Calu3 (cell line): ENCODE measurements at regions of chr6 and their contacts with region 1.

Region 1: DNA sequence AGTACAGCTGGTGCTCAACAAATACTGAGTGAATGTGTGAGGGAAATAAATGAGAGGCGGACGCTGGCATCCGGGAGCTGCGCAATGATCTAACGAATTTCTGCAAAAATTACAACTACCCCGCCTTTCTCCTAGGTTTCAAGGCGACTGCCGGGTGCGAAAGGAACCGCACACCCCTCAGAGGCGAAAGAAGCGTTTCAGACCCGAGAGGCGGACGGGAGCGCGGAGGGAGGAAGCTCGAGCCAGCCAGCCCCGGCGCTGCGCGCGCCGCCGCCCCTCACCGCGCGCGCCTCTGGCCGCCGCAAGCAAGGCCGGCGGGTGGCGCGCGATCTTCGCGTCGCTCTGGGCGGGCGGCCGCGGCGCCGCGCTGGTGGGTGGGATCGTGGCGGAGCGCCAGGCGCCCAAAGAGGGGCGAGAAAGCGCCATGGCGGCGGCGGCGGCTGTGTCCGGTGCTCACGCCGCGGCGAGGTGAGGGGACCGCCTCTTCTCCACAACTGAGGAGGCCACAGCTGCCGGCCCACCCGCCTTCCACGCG is at the start of gene BLTP3A:
- DNase-seq: peak; percentile 90
- H3K4me3 Mint-ChIP-seq: peak within 1 kb of the TSS; percentile 93
- H3K27ac Mint-ChIP-seq: peak within 1 kb of the TSS; percentile 96
- H3K4me1 Mint-ChIP-seq: peaks cover 34% of the 10 kb centered on the region
- H3K27me3 Mint-ChIP-seq: no peaks in the 10 kb centered on the region
- CTCF ChIP-seq: no peak
- total RNA-seq, gene BLTP3A: 33.4 and 34.8 TPM in 2 replicates

Region 2: GRCh38 chr6:34436803-34437643 is 354.7 kb before region 1 on chr6:
- CTCF ChIA-PET with region 1: no interaction called
- intact Hi-C with region 1: no loop called
- DNase-seq: no peak
- H3K4me3 Mint-ChIP-seq: no peak overlapping the region
- H3K27ac Mint-ChIP-seq: no peak overlapping the region
- H3K4me1 Mint-ChIP-seq: no peaks in the 10 kb centered on the region
- H3K27me3 Mint-ChIP-seq: peaks cover 14% of the 10 kb centered on the region
- CTCF ChIP-seq: no peak

Region 3: DNA sequence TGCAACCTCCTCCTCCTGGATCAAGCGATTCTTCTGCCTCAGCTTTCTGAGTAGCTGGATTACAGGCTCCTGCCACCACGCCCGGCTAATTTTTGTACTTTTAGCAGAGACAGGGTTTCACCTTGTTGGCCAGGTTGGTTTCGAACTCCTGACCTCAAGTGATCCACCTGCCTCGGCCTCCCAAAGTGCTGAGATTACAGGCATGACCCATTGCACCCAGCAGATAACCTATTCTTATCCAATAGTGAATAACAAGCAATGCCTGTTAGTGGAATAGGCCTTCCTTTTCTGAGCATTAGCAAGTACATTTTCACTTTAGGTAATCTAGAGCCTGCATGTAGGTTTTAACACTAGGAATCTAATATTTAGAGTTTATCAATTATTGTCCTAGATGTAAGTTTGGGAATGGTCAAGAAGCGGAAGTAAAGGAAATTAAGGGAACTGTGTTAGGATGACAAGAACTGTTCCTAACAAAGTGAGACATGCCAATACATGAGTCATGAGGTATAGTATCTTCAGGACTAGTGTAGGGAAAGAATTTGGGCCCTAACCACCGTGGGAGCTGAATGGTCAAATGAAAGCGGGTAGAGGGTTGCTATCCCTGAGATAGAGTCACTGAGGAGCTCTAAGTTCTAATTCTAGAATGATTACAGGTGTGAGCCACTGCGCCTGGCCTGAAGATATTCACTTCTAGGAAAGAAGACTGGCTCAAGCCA is 15.1 kb after region 1 on chr6:
- CTCF ChIA-PET with region 1: interaction called, 10 read pairs
- intact Hi-C with region 1: no loop called
- DNase-seq: no peak
- H3K4me3 Mint-ChIP-seq: no peak overlapping the region
- H3K27ac Mint-ChIP-seq: no peak overlapping the region
- H3K4me1 Mint-ChIP-seq: peaks cover 41% of the 10 kb centered on the region
- H3K27me3 Mint-ChIP-seq: no peaks in the 10 kb centered on the region
- CTCF ChIP-seq: no peak

Region 4: GRCh38 chr6:34834789-34835518 is 43.2 kb after region 1 on chr6:
- CTCF ChIA-PET with region 1: no interaction called
- intact Hi-C with region 1: no loop called
- DNase-seq: no peak
- H3K4me3 Mint-ChIP-seq: no peak overlapping the region
- H3K27ac Mint-ChIP-seq: no peak overlapping the region
- H3K4me1 Mint-ChIP-seq: no peaks in the 10 kb centered on the region
- H3K27me3 Mint-ChIP-seq: no peaks in the 10 kb centered on the region
- CTCF ChIP-seq: no peak